Ascending aorta (tissue), 2 donors: ENCODE measurements at regions of chr22 and their contacts with region 1.

Region 1: DNA sequence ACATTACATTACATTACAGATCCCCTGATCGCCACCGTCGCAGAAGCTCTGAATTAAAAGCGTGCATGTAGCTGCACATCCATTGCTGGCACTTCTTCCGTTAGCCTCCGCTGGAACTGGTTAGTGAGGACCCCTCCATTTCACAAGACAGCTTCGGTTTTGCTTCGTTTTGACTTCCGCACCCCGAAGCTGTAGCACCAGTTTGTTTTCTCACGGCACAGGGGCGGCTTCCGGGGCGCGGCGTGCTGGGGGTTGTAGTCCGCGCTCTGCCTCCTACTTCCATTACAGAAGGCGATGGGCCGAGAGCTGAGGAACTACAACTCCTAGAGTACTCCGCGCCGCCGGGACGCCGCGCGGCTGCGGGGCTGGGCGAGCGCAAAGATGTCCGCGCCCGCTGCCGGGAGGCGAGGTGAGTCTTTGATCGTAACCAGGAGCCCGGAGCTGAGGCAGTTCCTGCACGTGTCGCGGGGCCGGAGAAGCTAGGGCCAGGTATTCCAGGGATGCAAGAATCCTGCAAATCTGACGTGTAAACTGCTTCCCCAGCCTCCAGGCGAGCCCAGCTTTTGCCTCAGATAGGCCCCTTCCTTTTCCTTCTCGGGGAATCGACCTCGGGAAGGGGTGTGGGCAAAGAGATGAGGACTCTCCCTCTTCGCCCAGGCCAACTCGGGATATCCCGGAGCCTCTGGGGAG is at the start of gene PEX26:
- DNase-seq: peak; percentile 87 to 98
- H3K4me3 ChIP-seq: peak within 1 kb of the TSS; percentile 73 to 93
- H3K27ac ChIP-seq: peak within 1 kb of the TSS; percentile 62 to 65
- H3K4me1 ChIP-seq: peaks cover 0 to 23% of the 10 kb centered on the region in 2 donors
- H3K27me3 ChIP-seq: no peaks in the 10 kb centered on the region
- CTCF ChIP-seq: no peak
- total RNA-seq, gene PEX26: 38.1 TPM

Region 2: GRCh38 chr22:16917144-16918003 is 1160.4 kb before region 1 on chr22:
- intact Hi-C with region 1: no loop called
- DNase-seq: no peak
- H3K4me3 ChIP-seq: no peak overlapping the region
- H3K27ac ChIP-seq: no peak overlapping the region
- H3K4me1 ChIP-seq: no peaks in the 10 kb centered on the region
- H3K27me3 ChIP-seq: no peaks in the 10 kb centered on the region
- CTCF ChIP-seq: peak in 2 of 3 experiments; percentile 14 to 45

Region 3: DNA sequence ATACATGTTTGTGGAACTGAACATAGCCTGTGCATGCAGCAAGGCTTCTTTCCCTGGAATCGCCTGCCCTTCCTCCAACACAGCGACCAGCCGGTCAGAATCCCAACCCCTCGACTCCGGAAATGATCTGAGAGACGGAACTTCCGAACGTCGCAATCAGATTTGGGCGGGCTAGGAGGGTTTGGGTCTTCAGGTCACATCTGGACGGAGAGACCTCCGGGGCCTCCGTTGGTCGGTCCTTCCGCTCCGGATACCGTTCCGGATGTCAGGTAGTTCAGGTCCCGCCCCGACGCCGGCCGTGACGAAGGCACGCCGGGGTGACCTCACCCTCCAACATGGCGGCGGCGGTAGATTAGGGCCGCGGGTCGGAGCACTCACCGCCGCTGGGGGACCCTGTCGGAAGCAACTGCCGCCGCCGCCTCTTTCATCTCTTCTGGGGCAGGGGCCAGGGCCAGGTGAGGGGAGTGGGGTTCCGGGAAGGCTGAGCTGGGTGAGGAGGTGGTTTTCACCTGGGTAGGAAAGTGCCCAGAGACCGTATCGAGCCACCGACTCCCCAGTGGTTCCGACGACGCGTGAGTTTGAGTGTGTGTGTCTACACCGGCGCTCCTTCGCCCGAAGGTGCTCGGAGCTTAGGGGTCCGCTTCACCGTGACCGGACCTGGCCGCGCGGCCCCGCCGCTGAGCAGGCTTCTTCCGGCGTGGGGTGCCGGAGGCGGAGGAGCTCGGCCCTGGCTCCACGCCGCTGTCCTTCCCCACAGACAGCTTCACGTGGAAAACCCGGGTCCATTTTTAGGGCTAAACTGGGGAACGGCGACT is 439.1 kb before region 1 on chr22 and contains the start of gene BCL2L13:
- intact Hi-C with region 1: loop called (anchors 5 kb)
- DNase-seq: peak; percentile 71 to 96
- H3K4me3 ChIP-seq: peak within 1 kb of the TSS; percentile 70 to 91
- H3K27ac ChIP-seq: peak within 1 kb of the TSS; percentile 96 to 100
- H3K4me1 ChIP-seq: peaks cover 5 to 11% of the 10 kb centered on the region in 2 donors
- H3K27me3 ChIP-seq: no peaks in the 10 kb centered on the region
- CTCF ChIP-seq: no peak
- total RNA-seq, gene BCL2L13: 4.6 TPM

Region 4: GRCh38 chr22:17830043-17830961 is 247.5 kb before region 1 on chr22:
- intact Hi-C with region 1: loop called (anchors 1 kb)
- DNase-seq: peak; percentile 53 to 93
- H3K4me3 ChIP-seq: no peak overlapping the region
- H3K27ac ChIP-seq: peak overlapping the region; percentile 37 to 63
- H3K4me1 ChIP-seq: peaks cover 10 to 15% of the 10 kb centered on the region in 2 donors
- H3K27me3 ChIP-seq: no peaks in the 10 kb centered on the region
- CTCF ChIP-seq: peak; percentile 97 to 99 (median 99)

Region 5: DNA sequence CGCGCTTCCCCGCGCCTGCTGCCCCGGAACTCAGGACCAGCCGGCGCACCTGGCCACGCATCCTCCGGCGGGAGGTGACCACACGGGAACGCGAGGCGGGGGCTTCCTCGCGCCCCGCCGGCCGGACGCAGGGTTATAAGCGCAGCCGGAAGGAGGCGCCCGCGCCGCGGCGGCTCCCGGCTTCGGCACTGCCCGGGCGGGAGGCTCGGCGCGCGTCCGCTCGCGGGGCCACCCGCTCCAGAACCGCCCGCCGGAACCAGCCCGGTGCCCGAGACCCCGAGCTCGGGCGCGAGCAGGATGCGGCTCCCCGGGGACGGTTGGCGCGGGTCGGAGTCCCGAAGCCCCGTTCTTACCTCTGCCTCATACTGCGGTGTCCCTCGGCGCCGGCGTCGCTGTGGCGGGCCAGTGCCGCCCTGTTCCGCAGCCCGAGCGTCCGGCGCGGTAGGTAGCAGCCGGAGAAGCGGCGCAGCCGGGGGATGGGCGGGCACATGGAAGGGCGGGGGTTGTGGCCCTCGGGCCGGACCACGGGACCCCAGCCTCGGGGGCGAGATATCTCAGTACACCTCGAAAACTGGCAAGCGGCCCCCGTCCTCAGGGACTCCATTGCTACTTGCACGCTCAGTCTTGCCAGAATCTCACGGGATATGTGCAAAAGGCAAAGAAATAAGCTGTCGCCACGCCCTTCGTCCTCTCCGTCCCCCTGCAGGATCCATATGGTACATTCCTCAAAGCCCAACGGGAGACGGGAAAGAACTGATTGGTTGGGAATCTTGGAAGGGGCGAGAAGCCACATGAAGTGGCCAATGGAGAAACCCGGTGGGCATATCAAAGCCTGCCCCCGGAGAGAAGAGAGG is 76.5 kb before region 1 on chr22:
- intact Hi-C with region 1: loop called (anchors 1 kb)
- DNase-seq: peak; percentile 65 to 94
- H3K4me3 ChIP-seq: peak overlapping the region; percentile 70 to 98
- H3K27ac ChIP-seq: peak overlapping the region; percentile 88 to 92
- H3K4me1 ChIP-seq: peaks cover 0 to 11% of the 10 kb centered on the region in 2 donors
- H3K27me3 ChIP-seq: no peaks in the 10 kb centered on the region
- CTCF ChIP-seq: peak; percentile 37 to 58 (median 50)

Region 6: GRCh38 chr22:18012531-18012930 is 65.3 kb before region 1 on chr22:
- intact Hi-C with region 1: no loop called
- DNase-seq: no peak
- H3K4me3 ChIP-seq: no peak overlapping the region
- H3K27ac ChIP-seq: no peak overlapping the region
- H3K4me1 ChIP-seq: no peaks in the 10 kb centered on the region
- H3K27me3 ChIP-seq: no peaks in the 10 kb centered on the region
- CTCF ChIP-seq: no peak

Region 7: DNA sequence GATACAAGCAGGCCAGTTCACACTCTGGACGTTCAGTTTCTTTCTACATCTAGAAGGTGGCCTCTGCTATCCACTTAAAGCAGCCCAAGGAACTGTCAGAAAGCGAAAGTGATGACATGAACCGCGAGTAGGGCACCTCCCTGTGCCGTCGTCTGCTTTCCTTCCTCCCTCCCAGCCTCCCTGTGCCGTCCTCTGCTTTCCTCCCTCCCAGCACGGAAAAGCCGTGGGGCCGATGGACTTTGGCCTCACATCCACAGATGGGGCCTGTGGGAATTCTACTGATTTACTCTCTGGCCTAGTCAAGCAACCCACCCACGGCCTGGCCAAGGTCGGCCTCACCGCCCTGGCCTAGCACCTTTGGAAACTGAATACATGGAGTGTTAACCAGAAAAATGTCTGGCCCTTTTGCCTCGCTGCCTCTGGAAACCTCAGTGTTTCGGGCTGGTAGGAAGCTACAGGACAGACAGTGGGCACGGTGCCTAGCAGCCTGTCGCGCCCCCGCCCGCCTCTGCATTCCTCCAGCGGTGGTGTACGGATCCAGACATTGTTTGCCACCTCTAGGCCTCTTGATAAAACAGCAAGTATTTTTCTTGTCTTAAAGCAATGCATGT is 14.2 kb after region 1 on chr22:
- intact Hi-C with region 1: loop called (anchors 1 kb)
- DNase-seq: peak in 1 of 2 donors; percentile 82
- H3K4me3 ChIP-seq: peak overlapping the region; percentile 46 to 64
- H3K27ac ChIP-seq: peak overlapping the region; percentile 94 to 97
- H3K4me1 ChIP-seq: no peaks in the 10 kb centered on the region
- H3K27me3 ChIP-seq: no peaks in the 10 kb centered on the region
- CTCF ChIP-seq: no peak